Psoas muscle (tissue), 8 donors: ENCODE measurements at regions of chr4 and their contacts with region 1.

Region 1: DNA sequence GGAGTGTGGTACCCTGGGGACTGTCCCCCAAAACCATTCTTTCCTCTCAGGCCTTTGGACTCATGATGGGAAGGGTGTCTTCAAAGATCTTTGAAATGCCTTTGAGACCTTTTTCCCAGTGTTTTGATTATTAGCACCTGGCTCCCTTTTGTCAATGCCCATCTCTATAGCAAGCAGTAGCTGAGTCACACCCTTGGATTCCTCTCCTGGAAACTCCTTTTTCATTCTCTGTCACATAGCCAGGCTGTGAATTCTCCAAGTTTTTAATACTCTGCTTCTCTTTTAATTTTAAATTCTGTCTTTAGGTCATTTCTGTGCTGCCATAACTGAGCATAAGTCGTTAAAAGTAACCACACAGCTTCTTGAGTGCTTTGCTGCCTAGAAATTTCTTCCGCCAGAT is 29.7 kb downstream of the IL21 start:
- DNase-seq: no peak
- ATAC-seq: no peak
- H3K4me3 ChIP-seq: no peak overlapping the region
- H3K27ac ChIP-seq: no peak overlapping the region
- H3K4me1 ChIP-seq: no peaks in the 10 kb centered on the region
- H3K27me3 ChIP-seq: no peaks in the 10 kb centered on the region
- CTCF ChIP-seq: no peak

Region 2: GRCh38 chr4:122900314-122900713 is 309.1 kb after region 1 on chr4:
- intact Hi-C with region 1: loop called in 1 of 2 experiments (anchors 10 kb)
- DNase-seq: no peak
- ATAC-seq: no peak
- H3K4me3 ChIP-seq: no peak overlapping the region
- H3K27ac ChIP-seq: no peak overlapping the region
- H3K4me1 ChIP-seq: no peaks in the 10 kb centered on the region
- H3K27me3 ChIP-seq: no peaks in the 10 kb centered on the region
- CTCF ChIP-seq: no peak